Colonic mucosa (tissue), 4 donors: ENCODE measurements at regions of chr9 and their contacts with region 1.

Region 1: GRCh38 chr9:76658535-76659231 is 105.6 kb upstream of the PCA3 start:
- DNase-seq: no peak
- H3K4me3 ChIP-seq: no peak overlapping the region
- H3K27ac ChIP-seq: no peak overlapping the region
- H3K4me1 ChIP-seq: no peaks in the 10 kb centered on the region
- H3K27me3 ChIP-seq: no peaks in the 10 kb centered on the region
- CTCF ChIP-seq: peak; percentile 53

Region 2: DNA sequence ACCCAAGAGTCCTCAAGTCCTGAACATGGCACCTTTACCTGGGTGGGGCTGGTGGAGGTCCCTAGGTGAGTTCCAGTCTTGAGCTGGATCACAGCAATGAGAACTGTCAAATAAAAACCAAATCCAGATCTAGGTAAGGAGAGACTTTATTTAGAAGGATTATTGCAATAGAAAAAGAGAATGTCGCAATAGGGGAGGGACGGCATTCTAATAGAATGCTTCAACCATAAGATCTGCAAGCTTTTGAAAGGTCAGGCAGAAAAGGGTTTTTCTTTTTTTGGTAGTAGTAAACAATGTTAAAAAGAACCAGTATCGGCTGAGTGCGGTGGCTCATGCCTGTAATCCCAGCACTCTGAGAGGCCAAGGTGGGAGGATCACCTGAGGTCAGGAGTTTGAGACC is 204.9 kb before region 1 on chr9:
- intact Hi-C with region 1: loop called (anchors 2 kb)
- DNase-seq: no peak
- H3K4me3 ChIP-seq: no peak overlapping the region
- H3K27ac ChIP-seq: no peak overlapping the region
- H3K4me1 ChIP-seq: no peaks in the 10 kb centered on the region
- H3K27me3 ChIP-seq: no peaks in the 10 kb centered on the region
- CTCF ChIP-seq: no peak

Region 3: GRCh38 chr9:76585487-76586389 is 72.9 kb before region 1 on chr9:
- intact Hi-C with region 1: loop called (anchors 10 kb)
- DNase-seq: peak; percentile 54
- H3K4me3 ChIP-seq: no peak overlapping the region
- H3K27ac ChIP-seq: peak overlapping the region; percentile 77
- H3K4me1 ChIP-seq: peaks cover 9% of the 10 kb centered on the region
- H3K27me3 ChIP-seq: no peaks in the 10 kb centered on the region
- CTCF ChIP-seq: no peak